Heart right ventricle (tissue), 16 donors: ENCODE measurements at regions of chr5 and their contacts with region 1.

Region 1: GRCh38 chr5:159657771-159658170 is 258.5 kb upstream of the ADRA1B start:
- DNase-seq: no peak
- ATAC-seq: peak in 1 of 8 donors; percentile 24
- H3K4me3 ChIP-seq: no peak overlapping the region
- H3K27ac ChIP-seq: no peak overlapping the region
- H3K4me1 ChIP-seq: peaks cover 0 to 25% (median 4%) of the 10 kb centered on the region in 9 donors
- H3K27me3 ChIP-seq: no peaks in the 10 kb centered on the region
- CTCF ChIP-seq: no peak

Region 2: DNA sequence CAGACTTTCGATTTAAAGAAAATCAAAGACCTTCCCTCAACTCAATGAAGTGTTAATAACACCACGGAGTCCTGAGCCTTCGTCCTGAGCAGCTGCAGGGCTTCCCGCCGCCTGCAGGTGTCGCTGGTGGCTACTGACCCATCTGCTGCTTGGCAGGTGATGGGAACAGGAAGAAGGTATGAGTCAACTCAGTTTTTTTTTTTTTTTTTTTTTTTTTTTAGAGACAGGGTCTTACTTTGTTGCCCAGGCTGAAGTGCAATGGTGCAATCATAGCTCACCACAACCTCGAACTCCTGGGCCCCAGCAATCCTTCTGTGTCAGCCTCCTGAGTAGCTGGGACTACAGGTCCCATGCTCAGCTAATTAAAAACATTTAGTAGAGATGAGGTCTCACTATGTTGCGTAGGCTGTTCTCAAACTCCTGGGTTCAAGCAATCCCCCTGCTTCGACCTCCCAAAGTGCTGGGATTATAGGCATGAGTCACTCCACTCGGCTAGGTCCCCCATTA is 141.8 kb before region 1 on chr5:
- intact Hi-C with region 1: loop called in 1 of 10 experiments (anchors 10 kb)
- DNase-seq: peak; percentile 17 to 53
- ATAC-seq: peak; percentile 49 to 78 (median 69)
- H3K4me3 ChIP-seq: no peak overlapping the region
- H3K27ac ChIP-seq: no peak overlapping the region
- H3K4me1 ChIP-seq: peaks cover 0 to 8% (median under 1%) of the 10 kb centered on the region in 9 donors
- H3K27me3 ChIP-seq: no peaks in the 10 kb centered on the region
- CTCF ChIP-seq: peak; percentile 45 to 72 (median 70)

Region 3: GRCh38 chr5:159560088-159560487 is 97.7 kb before region 1 on chr5:
- intact Hi-C with region 1: no loop called
- DNase-seq: no peak
- ATAC-seq: no peak
- H3K4me3 ChIP-seq: no peak overlapping the region
- H3K27ac ChIP-seq: no peak overlapping the region
- H3K4me1 ChIP-seq: no peaks in the 10 kb centered on the region
- H3K27me3 ChIP-seq: peaks cover 0 to 4% (median 0%) of the 10 kb centered on the region in 7 donors
- CTCF ChIP-seq: no peak